ENCODE measurements at regions of chr11 and their contacts with region 1.

Region 1: GRCh38 chr11:75248690-75249268 is 8.2 kb downstream of the TPBGL start:
- DNase-seq: peak; percentile 88
- H3K4me3 ChIP-seq: no peak overlapping the region
- H3K27ac ChIP-seq: no peak overlapping the region
- H3K4me1 ChIP-seq: no peaks in the 10 kb centered on the region
- H3K27me3 ChIP-seq: peaks cover 19 to 28% of the 10 kb centered on the region in 2 experiments
- CTCF ChIP-seq: peak; percentile 99 to 100
- POLR2A ChIP-seq: no peak

Region 2: DNA sequence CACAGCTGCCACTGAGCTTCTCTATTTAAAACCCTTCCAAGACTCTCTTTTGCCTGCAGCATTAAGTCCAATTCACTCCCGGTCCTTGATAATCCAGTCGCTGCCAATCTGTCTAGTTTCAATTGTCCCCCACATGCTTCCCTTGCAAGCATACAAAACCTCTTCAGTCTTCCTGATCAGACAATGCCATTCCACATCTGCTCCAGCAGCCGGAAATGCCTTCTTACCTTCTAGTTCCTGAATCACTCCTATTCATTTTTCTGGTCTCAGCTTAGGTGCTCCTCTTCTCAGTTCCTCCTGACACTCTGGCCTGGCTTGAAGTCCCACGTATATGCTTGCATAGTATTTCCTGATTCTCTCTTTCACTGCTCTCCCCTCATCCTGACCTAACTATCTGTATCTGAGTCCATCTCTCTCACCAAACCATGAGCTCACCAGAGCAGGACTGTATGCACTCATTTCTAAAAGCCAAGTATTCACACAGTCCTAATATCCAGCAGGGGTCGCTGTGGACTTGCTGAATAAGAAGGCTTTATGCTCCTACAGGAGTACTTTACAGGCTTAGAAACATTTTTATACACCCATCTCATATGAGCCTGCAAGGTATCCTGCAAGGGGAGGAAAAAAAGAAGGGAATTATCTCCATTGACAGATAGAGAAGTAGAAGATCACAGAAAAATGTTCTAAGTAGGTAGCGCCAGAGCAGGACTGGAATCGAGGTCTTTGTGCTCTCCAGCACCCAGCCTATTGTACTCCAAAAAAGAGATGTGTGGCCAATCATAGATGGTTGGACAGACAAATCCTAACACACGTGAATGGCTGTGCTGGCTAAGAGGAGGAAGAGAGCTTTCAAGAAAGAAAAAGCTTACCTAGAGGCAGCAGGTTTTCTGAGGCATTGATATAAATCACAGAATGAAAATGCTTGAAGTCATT is 319.1 kb before region 1 on chr11:
- CTCF ChIA-PET with region 1: interaction called, 33 read pairs
- POLR2A ChIA-PET with region 1: no interaction called
- dilution Hi-C with region 1: no loop called
- intact Hi-C with region 1: loop called (anchors 2 kb)
- DNase-seq: peak; percentile 84
- H3K4me3 ChIP-seq: no peak overlapping the region
- H3K27ac ChIP-seq: peak overlapping the region; percentile 23
- H3K4me1 ChIP-seq: peaks cover 25% of the 10 kb centered on the region
- H3K27me3 ChIP-seq: no peaks in the 10 kb centered on the region
- CTCF ChIP-seq: peak; percentile 70 to 78
- POLR2A ChIP-seq: no peak

Region 3: GRCh38 chr11:75031771-75032549 is 216.8 kb before region 1 on chr11:
- CTCF ChIA-PET with region 1: interaction called, 10 read pairs
- POLR2A ChIA-PET with region 1: no interaction called
- dilution Hi-C with region 1: no loop called
- intact Hi-C with region 1: no loop called
- DNase-seq: peak; percentile 70
- H3K4me3 ChIP-seq: no peak overlapping the region
- H3K27ac ChIP-seq: no peak overlapping the region
- H3K4me1 ChIP-seq: peaks cover 8% of the 10 kb centered on the region
- H3K27me3 ChIP-seq: peaks cover 0 to 7% of the 10 kb centered on the region in 2 experiments
- CTCF ChIP-seq: peak; percentile 85
- POLR2A ChIP-seq: no peak

Region 4: DNA sequence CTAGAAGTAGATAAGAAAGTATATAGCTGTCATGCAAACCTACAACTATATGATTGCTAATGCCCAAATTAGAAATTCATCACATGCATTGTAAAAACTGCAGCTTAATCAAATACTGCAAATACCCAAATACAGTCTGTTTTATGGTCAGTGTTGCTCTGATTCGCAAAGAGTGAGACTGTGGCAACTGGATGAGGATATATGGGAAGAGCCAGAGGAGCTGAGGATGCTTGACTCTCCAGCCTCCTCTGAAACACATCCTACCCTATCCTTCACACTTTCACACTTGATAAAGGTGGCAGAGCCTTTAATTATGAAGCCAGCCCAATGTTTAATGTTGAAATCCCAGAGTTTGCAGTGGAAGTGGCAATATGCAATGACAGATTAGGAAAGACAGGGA is 130.2 kb before region 1 on chr11:
- CTCF ChIA-PET with region 1: no interaction called
- POLR2A ChIA-PET with region 1: no interaction called
- dilution Hi-C with region 1: no loop called
- intact Hi-C with region 1: no loop called
- DNase-seq: no peak
- H3K4me3 ChIP-seq: no peak overlapping the region
- H3K27ac ChIP-seq: no peak overlapping the region
- H3K4me1 ChIP-seq: no peaks in the 10 kb centered on the region
- H3K27me3 ChIP-seq: peaks cover 3 to 4% of the 10 kb centered on the region in 2 experiments
- CTCF ChIP-seq: no peak
- POLR2A ChIP-seq: no peak

Region 5: DNA sequence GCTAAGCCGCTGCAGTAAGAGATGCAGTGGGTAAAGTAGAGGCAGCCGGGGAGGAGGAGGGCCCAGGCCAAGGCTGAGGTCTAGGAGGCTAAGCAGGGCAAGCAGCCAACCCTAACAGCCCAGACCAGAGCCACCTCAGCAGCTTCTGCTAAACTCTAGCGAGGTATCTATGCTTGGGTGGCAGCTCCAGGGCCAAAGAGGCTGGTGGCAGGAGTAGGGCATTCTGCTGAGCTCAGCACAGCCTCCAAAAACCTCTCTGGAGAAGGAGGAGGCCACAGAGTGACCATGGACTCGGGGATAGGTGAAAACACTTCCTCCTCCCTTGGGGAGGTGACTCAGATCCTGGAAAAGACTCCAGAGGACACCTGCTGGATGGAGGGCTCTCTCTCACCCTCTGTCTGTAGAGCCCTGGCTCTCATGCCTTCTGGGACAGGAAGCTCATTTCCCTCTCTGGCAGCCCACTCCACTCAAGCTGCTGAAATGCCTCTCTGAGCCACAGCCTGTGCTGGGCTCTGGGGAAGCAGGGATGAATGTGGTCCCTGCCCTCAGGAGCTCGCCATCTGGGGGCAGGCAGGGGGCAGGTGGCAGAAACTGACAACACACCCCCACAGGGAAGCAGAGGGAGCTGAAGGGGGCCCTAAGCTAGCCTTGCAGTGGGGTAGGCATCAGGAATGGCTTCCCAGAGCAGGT is 24.7 kb before region 1 on chr11:
- CTCF ChIA-PET with region 1: interaction called, 24 read pairs
- POLR2A ChIA-PET with region 1: no interaction called
- dilution Hi-C with region 1: no loop called
- intact Hi-C with region 1: no loop called
- DNase-seq: no peak
- H3K4me3 ChIP-seq: no peak overlapping the region
- H3K27ac ChIP-seq: no peak overlapping the region
- H3K4me1 ChIP-seq: no peaks in the 10 kb centered on the region
- H3K27me3 ChIP-seq: peaks cover 2 to 3% of the 10 kb centered on the region in 2 experiments
- CTCF ChIP-seq: no peak
- POLR2A ChIP-seq: no peak

Region 6: DNA sequence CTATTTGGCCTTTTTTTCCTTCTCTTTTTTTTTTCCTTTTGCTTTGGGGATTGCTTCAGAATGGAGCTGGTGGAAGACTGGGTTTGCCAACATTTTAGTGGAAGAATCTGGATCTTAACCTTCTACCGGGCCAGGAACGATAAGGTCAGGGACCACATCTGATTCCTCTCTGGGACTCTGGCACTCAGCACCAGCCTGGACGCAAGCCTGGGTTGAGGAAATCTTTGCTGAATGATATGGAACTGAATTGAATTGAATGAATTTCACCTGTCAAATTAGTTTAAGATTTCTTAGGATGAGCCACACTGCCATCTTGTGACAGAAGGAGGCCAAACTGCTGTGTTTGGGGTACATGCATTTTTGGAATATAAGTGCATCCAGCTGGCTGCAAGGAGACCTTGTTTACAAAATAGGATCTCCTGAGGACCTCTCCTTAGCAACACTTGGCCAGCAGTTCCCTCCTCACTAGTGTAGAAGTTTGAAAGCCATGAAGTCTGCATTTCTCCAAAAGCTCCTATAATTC is 22.2 kb after region 1 on chr11:
- CTCF ChIA-PET with region 1: interaction called, 15 read pairs
- POLR2A ChIA-PET with region 1: no interaction called
- dilution Hi-C with region 1: no loop called
- intact Hi-C with region 1: no loop called
- DNase-seq: peak; percentile 23
- H3K4me3 ChIP-seq: no peak overlapping the region
- H3K27ac ChIP-seq: no peak overlapping the region
- H3K4me1 ChIP-seq: peaks cover 9% of the 10 kb centered on the region
- H3K27me3 ChIP-seq: no peaks in the 10 kb centered on the region
- CTCF ChIP-seq: peak in 1 of 2 donors; percentile 12
- POLR2A ChIP-seq: no peak

Region 7: GRCh38 chr11:75286826-75287465 is 38.2 kb after region 1 on chr11:
- CTCF ChIA-PET with region 1: no interaction called
- POLR2A ChIA-PET with region 1: no interaction called
- dilution Hi-C with region 1: no loop called
- intact Hi-C with region 1: no loop called
- DNase-seq: no peak
- H3K4me3 ChIP-seq: no peak overlapping the region
- H3K27ac ChIP-seq: no peak overlapping the region
- H3K4me1 ChIP-seq: no peaks in the 10 kb centered on the region
- H3K27me3 ChIP-seq: no peaks in the 10 kb centered on the region
- CTCF ChIP-seq: no peak
- POLR2A ChIP-seq: no peak

Region 8: GRCh38 chr11:75543806-75544205 is 295.0 kb after region 1 on chr11:
- CTCF ChIA-PET with region 1: no interaction called
- POLR2A ChIA-PET with region 1: no interaction called
- dilution Hi-C with region 1: no loop called
- intact Hi-C with region 1: no loop called
- DNase-seq: no peak
- H3K4me3 ChIP-seq: no peak overlapping the region
- H3K27ac ChIP-seq: no peak overlapping the region
- H3K4me1 ChIP-seq: no peaks in the 10 kb centered on the region
- H3K27me3 ChIP-seq: peaks cover 0 to 2% of the 10 kb centered on the region in 2 experiments
- CTCF ChIP-seq: no peak
- POLR2A ChIP-seq: no peak